Natural killer cell (primary cell): ENCODE measurements at regions of chr19 and their contacts with region 1.

Region 1: DNA sequence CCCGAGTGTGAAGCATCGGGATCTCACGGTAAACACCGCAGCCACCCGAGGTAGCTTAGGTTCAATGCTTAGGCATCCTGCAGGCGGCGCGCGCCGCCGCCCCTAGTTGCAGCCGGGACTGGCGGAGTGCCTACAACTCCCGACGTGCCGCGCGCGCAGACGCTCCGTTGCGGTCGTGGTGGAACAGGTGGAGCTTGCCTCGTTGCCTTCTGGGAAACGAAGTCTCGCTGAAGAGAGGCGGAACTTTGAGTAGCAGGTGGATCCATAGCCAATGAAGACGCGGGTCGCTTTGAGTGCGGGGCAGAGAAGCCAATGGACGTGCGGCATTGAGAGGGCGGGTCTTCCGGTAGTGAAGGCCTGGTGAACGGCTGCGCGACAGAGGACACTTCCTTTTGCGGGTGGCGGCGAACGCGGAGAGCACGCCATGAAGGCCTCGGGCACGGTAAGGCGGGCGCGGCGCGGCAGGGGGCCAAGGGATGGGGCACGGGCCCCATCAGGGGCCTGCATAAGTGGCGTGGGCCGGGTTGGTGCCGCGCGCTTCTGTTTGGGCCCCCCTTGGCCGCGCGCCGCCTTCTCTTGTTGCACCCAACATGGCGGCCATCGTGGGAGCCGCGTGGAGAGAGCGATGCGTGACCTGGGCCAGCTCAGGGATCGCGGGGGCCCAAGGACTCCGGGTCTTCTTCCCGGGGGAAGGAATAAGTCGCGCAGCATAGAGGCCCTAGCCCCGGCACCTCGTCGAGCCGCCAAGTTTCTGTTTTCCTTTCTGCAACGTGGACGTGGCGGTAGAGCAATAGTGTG is at the start of gene RPL18A:
- DNase-seq: peak; percentile 94 to 99
- ATAC-seq: peak; percentile 93 to 99 (median 95)
- H3K4me3 ChIP-seq: peak within 1 kb of the TSS; percentile 68
- H3K4me3 Mint-ChIP-seq: peak within 1 kb of the TSS; percentile 99
- H3K27ac ChIP-seq: peak within 1 kb of the TSS; percentile 46
- H3K27ac Mint-ChIP-seq: peak within 1 kb of the TSS; percentile 86 to 95
- H3K4me1 ChIP-seq: peaks cover 37% of the 10 kb centered on the region
- H3K4me1 Mint-ChIP-seq: peaks cover 30 to 32% of the 10 kb centered on the region in 2 donors
- H3K27me3 ChIP-seq: no peaks in the 10 kb centered on the region
- H3K27me3 Mint-ChIP-seq: no peaks in the 10 kb centered on the region
- CTCF ChIP-seq: peak; percentile 75
- total RNA-seq, gene RPL18A: 1,015 to 1,285 (median 1,208) TPM

Region 2: DNA sequence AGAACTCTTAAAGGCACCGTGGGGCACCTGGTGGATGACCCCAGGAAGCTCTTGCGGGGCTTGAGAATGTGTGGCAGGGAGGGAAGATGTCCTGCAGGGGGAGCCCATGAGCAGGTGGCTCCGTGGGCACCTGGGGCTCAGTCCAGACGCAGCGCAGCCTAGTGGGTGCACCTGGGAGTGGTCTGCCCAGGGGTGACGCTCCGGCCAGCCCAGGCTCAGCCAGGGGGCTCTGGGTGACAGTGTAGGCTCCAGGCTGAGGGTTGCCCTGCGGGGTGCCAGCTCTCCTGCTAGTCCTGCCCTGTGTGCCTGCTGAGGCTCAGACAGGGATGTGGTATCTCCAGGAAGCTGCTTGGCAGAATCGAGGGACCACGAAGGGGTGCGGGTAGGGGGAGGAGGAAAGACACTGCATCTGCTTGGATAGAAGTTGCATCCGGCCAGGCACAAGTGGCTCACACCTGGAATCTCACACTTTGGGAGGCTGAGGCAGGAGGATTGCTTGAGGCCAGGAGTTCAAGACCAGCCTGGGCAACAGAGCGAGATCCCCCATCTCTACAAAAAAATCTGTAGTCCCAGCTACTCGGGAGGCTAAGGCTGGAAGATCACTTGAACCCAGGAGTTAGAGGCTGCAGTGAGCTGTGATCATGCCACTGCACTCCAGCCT is 363.3 kb before region 1 on chr19:
- intact Hi-C with region 1: loop called (anchors 10 kb)
- DNase-seq: peak; percentile 83 to 92
- ATAC-seq: peak; percentile 99 to 100 (median 99)
- H3K4me3 ChIP-seq: no peak overlapping the region
- H3K4me3 Mint-ChIP-seq: no peak overlapping the region
- H3K27ac ChIP-seq: no peak overlapping the region
- H3K27ac Mint-ChIP-seq: no peak overlapping the region
- H3K4me1 ChIP-seq: peaks cover 24% of the 10 kb centered on the region
- H3K4me1 Mint-ChIP-seq: peaks cover 10 to 19% of the 10 kb centered on the region in 2 donors
- H3K27me3 ChIP-seq: no peaks in the 10 kb centered on the region
- H3K27me3 Mint-ChIP-seq: no peaks in the 10 kb centered on the region
- CTCF ChIP-seq: peak; percentile 98

Region 3: GRCh38 chr19:17703824-17704463 is 155.8 kb before region 1 on chr19:
- intact Hi-C with region 1: loop called (anchors 1 kb)
- DNase-seq: peak; percentile 68 to 82
- ATAC-seq: peak; percentile 88 to 97 (median 96)
- H3K4me3 ChIP-seq: no peak overlapping the region
- H3K4me3 Mint-ChIP-seq: no peak overlapping the region
- H3K27ac ChIP-seq: no peak overlapping the region
- H3K27ac Mint-ChIP-seq: no peak overlapping the region
- H3K4me1 ChIP-seq: no peaks in the 10 kb centered on the region
- H3K4me1 Mint-ChIP-seq: no peaks in the 10 kb centered on the region
- H3K27me3 ChIP-seq: no peaks in the 10 kb centered on the region
- H3K27me3 Mint-ChIP-seq: peaks cover 0 to 7% of the 10 kb centered on the region in 2 donors
- CTCF ChIP-seq: peak; percentile 88

Region 4: DNA sequence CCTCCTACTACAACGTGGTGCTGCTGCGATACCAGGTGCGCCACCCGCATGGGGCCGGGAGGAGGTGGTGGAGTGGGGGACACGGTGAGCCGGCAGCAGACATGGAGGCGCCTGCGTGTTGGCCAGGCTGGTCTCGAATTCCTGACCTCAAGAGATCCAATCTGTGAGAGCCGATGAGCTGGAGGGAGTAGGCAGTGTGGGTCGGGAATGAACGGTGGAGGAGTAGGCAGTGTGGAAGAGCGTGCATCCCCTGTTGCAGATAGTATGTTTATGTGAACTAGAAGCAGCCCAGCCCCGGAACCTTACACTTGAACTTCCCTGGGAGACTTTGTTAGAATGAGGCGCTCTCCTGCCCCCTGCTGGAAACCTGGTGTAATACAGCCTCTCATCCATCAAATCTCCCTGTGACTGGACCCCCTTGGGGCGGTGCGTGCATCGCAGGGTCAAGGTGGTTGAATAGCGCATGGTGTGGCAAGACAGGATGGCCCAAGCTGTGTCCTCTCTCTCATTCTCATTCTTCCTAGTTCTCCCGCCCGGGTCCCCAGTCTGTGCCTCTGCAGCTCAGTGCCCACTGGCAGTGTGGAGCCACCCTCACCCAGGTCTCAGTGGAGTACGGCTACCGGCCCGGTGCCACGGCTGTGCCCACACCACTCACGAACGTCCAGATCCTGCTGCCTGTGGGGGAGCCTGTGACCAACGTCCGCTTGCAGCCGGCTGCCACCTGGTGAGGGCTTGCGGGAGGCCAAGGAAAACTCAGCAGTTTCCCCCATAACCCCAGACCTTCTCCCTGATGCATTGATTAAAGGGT is 75.3 kb before region 1 on chr19:
- intact Hi-C with region 1: loop called (anchors 2 kb)
- DNase-seq: peak; percentile 66 to 85
- ATAC-seq: peak; percentile 71 to 89 (median 83)
- H3K4me3 ChIP-seq: no peak overlapping the region
- H3K4me3 Mint-ChIP-seq: no peak overlapping the region
- H3K27ac ChIP-seq: no peak overlapping the region
- H3K27ac Mint-ChIP-seq: no peak overlapping the region
- H3K4me1 ChIP-seq: peaks cover 3% of the 10 kb centered on the region
- H3K4me1 Mint-ChIP-seq: peaks cover 0 to 14% of the 10 kb centered on the region in 2 donors
- H3K27me3 ChIP-seq: no peaks in the 10 kb centered on the region
- H3K27me3 Mint-ChIP-seq: no peaks in the 10 kb centered on the region
- CTCF ChIP-seq: peak; percentile 80

Region 5: GRCh38 chr19:17889609-17890214 is 30.0 kb after region 1 on chr19:
- intact Hi-C with region 1: no loop called
- DNase-seq: no peak
- ATAC-seq: no peak
- H3K4me3 ChIP-seq: no peak overlapping the region
- H3K4me3 Mint-ChIP-seq: no peak overlapping the region
- H3K27ac ChIP-seq: no peak overlapping the region
- H3K27ac Mint-ChIP-seq: no peak overlapping the region
- H3K4me1 ChIP-seq: no peaks in the 10 kb centered on the region
- H3K4me1 Mint-ChIP-seq: no peaks in the 10 kb centered on the region
- H3K27me3 ChIP-seq: no peaks in the 10 kb centered on the region
- H3K27me3 Mint-ChIP-seq: peaks cover 0 to 5% of the 10 kb centered on the region in 2 donors
- CTCF ChIP-seq: no peak

Region 6: GRCh38 chr19:17932485-17933338 is 73.0 kb after region 1 on chr19 and contains the start of gene CCDC124:
- intact Hi-C with region 1: loop called (anchors 1 kb)
- DNase-seq: peak; percentile 91 to 96
- ATAC-seq: peak; percentile 93 to 96 (median 96)
- H3K4me3 ChIP-seq: peak within 1 kb of the TSS; percentile 70
- H3K4me3 Mint-ChIP-seq: peak within 1 kb of the TSS; percentile 96
- H3K27ac ChIP-seq: peak within 1 kb of the TSS; percentile 96
- H3K27ac Mint-ChIP-seq: peak within 1 kb of the TSS; percentile 94 to 97
- H3K4me1 ChIP-seq: peaks cover 23% of the 10 kb centered on the region
- H3K4me1 Mint-ChIP-seq: peaks cover 16 to 17% of the 10 kb centered on the region in 2 donors
- H3K27me3 ChIP-seq: no peaks in the 10 kb centered on the region
- H3K27me3 Mint-ChIP-seq: no peaks in the 10 kb centered on the region
- CTCF ChIP-seq: peak; percentile 79
- total RNA-seq, gene CCDC124: 32.6 to 37.6 (median 37.4) TPM

Region 7: GRCh38 chr19:18009412-18010066 is 149.8 kb after region 1 on chr19:
- intact Hi-C with region 1: no loop called
- DNase-seq: peak in 1 of 2 donors; percentile 40
- ATAC-seq: no peak
- H3K4me3 ChIP-seq: no peak overlapping the region
- H3K4me3 Mint-ChIP-seq: no peak overlapping the region
- H3K27ac ChIP-seq: no peak overlapping the region
- H3K27ac Mint-ChIP-seq: peak overlapping the region; percentile 94 to 95
- H3K4me1 ChIP-seq: peaks cover 36% of the 10 kb centered on the region
- H3K4me1 Mint-ChIP-seq: peaks cover 16 to 33% of the 10 kb centered on the region in 2 donors
- H3K27me3 ChIP-seq: no peaks in the 10 kb centered on the region
- H3K27me3 Mint-ChIP-seq: no peaks in the 10 kb centered on the region
- CTCF ChIP-seq: no peak